GM12878 (cell line): ENCODE measurements at regions of chr21 and their contacts with region 1.

Region 1: GRCh38 chr21:14325595-14325994 is 57.4 kb downstream of the HSPA13 start:
- DNase-seq: no peak
- ATAC-seq: no peak
- H3K4me3 ChIP-seq: no peak overlapping the region
- H3K27ac ChIP-seq: no peak overlapping the region
- H3K4me1 ChIP-seq: no peaks in the 10 kb centered on the region
- H3K27me3 ChIP-seq: no peaks in the 10 kb centered on the region
- CTCF ChIP-seq: no peak
- EP300 ChIP-seq: no peak
- POLR2A ChIP-seq: no peak
- RAD21 ChIP-seq: no peak

Region 2: DNA sequence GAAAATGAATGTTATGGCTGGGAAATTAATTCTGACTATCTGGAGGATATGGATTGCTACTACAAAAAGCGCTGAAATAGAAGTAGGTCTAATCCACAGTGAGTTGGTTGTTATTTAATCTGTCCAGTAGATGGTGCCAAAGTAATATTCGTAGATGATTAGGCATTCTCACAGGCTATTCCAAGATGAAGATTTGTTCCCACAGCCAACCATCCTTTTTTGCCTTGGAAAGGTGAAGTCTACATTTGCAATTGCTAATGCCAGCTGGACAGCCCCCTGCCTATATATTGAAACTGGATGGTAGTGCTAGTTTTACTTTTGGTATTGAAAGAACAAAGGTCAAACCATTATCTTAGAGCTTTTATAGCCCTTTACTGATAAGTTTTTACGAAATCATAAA is 65.8 kb before region 1 on chr21:
- CTCF ChIA-PET with region 1: no interaction called
- POLR2A ChIA-PET with region 1: no interaction called
- RAD21 ChIA-PET with region 1: no interaction called
- SMC1A ChIA-PET with region 1: no interaction called
- in situ Hi-C with region 1: no loop called
- intact Hi-C with region 1: loop called (anchors 10 kb)
- DNase-seq: no peak
- ATAC-seq: peak; percentile 76
- H3K4me3 ChIP-seq: no peak overlapping the region
- H3K27ac ChIP-seq: no peak overlapping the region
- H3K4me1 ChIP-seq: no peaks in the 10 kb centered on the region
- H3K27me3 ChIP-seq: no peaks in the 10 kb centered on the region; a peak in 1 of 4 replicates
- CTCF ChIP-seq: peak; percentile 35 to 56 (median 50); a peak in 4 of 6 replicates
- EP300 ChIP-seq: no peak
- POLR2A ChIP-seq: no peak
- RAD21 ChIP-seq: peak; percentile 69

Region 3: DNA sequence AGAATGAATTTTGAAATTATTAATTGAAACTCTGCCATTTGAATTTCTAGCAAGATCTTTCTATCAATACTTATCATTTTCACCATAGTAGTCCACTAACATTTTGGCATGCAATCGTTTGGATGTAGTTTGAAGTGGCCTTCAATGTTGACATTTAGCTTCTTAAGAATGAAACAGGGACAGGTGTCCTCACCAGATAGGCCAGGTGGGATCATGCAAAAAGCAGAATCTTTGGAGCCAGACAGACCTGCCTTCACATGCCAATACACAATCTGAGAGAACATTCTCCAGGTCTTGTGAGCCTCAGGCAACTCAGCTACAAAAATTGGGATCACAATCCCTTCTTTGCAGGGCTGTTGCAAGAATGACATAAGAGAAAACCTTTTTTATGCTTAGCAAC is 75.6 kb after region 1 on chr21:
- CTCF ChIA-PET with region 1: no interaction called
- POLR2A ChIA-PET with region 1: no interaction called
- RAD21 ChIA-PET with region 1: no interaction called
- SMC1A ChIA-PET with region 1: no interaction called
- in situ Hi-C with region 1: no loop called
- intact Hi-C with region 1: no loop called
- DNase-seq: no peak
- ATAC-seq: no peak
- H3K4me3 ChIP-seq: no peak overlapping the region
- H3K27ac ChIP-seq: no peak overlapping the region
- H3K4me1 ChIP-seq: no peaks in the 10 kb centered on the region
- H3K27me3 ChIP-seq: no peaks in the 10 kb centered on the region
- CTCF ChIP-seq: no peak
- EP300 ChIP-seq: no peak
- POLR2A ChIP-seq: no peak
- RAD21 ChIP-seq: no peak